Activated CD8-positive, alpha-beta T cell treated with anti-CD3 and anti-CD28 coated beads for 36 hours (primary cell): ENCODE measurements at regions of chr15 and their contacts with region 1.

Region 1: DNA sequence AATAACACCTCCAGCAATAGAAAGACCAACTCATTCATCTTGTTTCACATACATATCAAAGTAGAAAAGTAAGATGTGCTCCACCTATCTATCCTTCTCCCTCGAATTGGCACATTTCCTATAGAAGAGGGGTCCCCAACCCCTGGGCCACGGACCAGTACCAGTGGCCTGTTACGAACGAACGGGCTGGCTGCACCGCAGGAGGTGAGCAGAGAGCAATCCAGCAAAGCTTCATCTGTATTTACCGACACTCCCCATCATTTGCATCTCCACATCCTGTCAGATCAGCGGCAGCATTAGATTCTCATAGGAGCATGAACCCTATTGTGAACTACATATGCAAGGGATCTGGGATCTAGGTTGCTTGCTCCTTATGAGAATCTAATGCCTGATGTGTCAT is 95.0 kb upstream of the CGNL1 start:
- DNase-seq: no peak
- ATAC-seq: no peak
- H3K4me3 Mint-ChIP-seq: no peak overlapping the region
- H3K27ac Mint-ChIP-seq: no peak overlapping the region
- H3K4me1 Mint-ChIP-seq: peaks cover 5% of the 10 kb centered on the region
- H3K27me3 Mint-ChIP-seq: no peaks in the 10 kb centered on the region
- CTCF ChIP-seq: no peak

Region 2: GRCh38 chr15:57100136-57100539 is 181.2 kb before region 1 on chr15:
- CTCF ChIA-PET with region 1: no interaction called
- POLR2A ChIA-PET with region 1: no interaction called
- intact Hi-C with region 1: no loop called
- DNase-seq: no peak
- ATAC-seq: no peak
- H3K4me3 Mint-ChIP-seq: no peak overlapping the region
- H3K27ac Mint-ChIP-seq: no peak overlapping the region
- H3K4me1 Mint-ChIP-seq: peaks cover 4% of the 10 kb centered on the region
- H3K27me3 Mint-ChIP-seq: no peaks in the 10 kb centered on the region
- CTCF ChIP-seq: no peak

Region 3: GRCh38 chr15:57263520-57263919 is 17.8 kb before region 1 on chr15:
- CTCF ChIA-PET with region 1: no interaction called
- POLR2A ChIA-PET with region 1: no interaction called
- intact Hi-C with region 1: no loop called
- DNase-seq: no peak
- ATAC-seq: no peak
- H3K4me3 Mint-ChIP-seq: no peak overlapping the region
- H3K27ac Mint-ChIP-seq: no peak overlapping the region
- H3K4me1 Mint-ChIP-seq: no peaks in the 10 kb centered on the region
- H3K27me3 Mint-ChIP-seq: no peaks in the 10 kb centered on the region
- CTCF ChIP-seq: no peak

Region 4: GRCh38 chr15:57298843-57299550 is 17.7 kb after region 1 on chr15:
- CTCF ChIA-PET with region 1: no interaction called
- POLR2A ChIA-PET with region 1: no interaction called
- intact Hi-C with region 1: loop called (anchors 1 kb)
- DNase-seq: no peak
- ATAC-seq: no peak
- H3K4me3 Mint-ChIP-seq: no peak overlapping the region
- H3K27ac Mint-ChIP-seq: no peak overlapping the region
- H3K4me1 Mint-ChIP-seq: peaks cover 9% of the 10 kb centered on the region
- H3K27me3 Mint-ChIP-seq: no peaks in the 10 kb centered on the region
- CTCF ChIP-seq: no peak

Region 5: DNA sequence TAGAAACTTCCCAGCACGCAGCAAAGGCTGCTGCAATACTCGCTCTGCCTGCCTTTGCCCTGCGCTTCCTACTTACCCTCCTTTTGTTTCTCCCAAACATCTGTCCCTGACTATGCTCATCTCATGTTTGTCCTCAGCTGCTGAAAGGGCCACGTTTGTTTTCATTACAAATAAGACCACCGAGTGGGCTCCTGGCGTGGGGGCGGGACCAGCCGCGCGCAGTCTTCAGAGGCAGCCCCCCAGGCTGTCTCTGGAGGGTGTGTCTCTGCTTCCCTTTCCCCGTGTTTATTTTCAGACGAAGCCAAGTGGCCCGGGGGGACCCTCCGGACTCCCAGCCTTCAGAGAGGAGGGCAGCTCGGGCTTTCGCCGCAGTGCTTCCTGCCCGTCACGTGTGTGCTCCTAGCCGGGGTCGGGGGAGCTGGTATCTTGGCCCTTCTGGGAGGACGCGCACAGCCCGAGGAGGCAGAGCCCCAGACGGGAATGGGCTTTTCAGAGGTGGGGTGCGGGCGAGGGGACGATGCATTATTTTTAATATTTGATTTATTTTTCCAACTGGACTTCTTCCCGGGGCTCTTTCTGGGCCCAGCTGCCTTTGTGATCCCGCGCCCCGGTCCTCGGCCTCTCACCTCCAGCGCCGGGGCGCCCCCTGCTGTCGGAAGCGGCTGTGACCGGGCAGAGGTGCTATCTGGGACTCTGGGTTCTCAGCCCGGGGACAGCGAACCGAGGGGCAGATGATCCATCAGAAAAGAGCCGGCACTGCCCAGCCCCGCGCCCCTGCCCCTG is 25.0 kb after region 1 on chr15:
- CTCF ChIA-PET with region 1: interaction called, 11 read pairs
- POLR2A ChIA-PET with region 1: no interaction called
- intact Hi-C with region 1: no loop called
- DNase-seq: peak; percentile 89
- ATAC-seq: peak; percentile 93
- H3K4me3 Mint-ChIP-seq: peak overlapping the region; percentile 59
- H3K27ac Mint-ChIP-seq: no peak overlapping the region
- H3K4me1 Mint-ChIP-seq: no peaks in the 10 kb centered on the region
- H3K27me3 Mint-ChIP-seq: peaks cover 14% of the 10 kb centered on the region
- CTCF ChIP-seq: peak; percentile 89